ENCODE measurements at regions of chr20 and their contacts with region 1.

Region 1: GRCh38 chr20:35741892-35742740 is at the start of gene RBM39:
- H3K4me3 ChIP-seq: peak within 1 kb of the TSS; percentile 91
- H3K27ac ChIP-seq: peak within 1 kb of the TSS; percentile 100
- H3K4me1 ChIP-seq: no peaks in the 10 kb centered on the region
- CTCF ChIP-seq: peak; percentile 91

Region 2: GRCh38 chr20:35699127-35699975 is 42.8 kb before region 1 on chr20 and contains the starts of genes NFS1 and ROMO1:
- CTCF ChIA-PET with region 1: no interaction called
- POLR2A ChIA-PET with region 1: interaction called, 27 read pairs
- H3K4me3 ChIP-seq: peak within 1 kb of the TSS; percentile 75
- H3K27ac ChIP-seq: peak within 1 kb of the TSS; percentile 90
- H3K4me1 ChIP-seq: 0 out of 2 replicates have a peak, but pooled peaks cover 4% of the 10 kb centered on the region
- CTCF ChIP-seq: peak; percentile 96

Region 3: GRCh38 chr20:35771689-35772562 is 29.8 kb after region 1 on chr20 and contains the start of gene PHF20:
- CTCF ChIA-PET with region 1: interaction called, 5 read pairs
- POLR2A ChIA-PET with region 1: interaction called, 109 read pairs
- H3K4me3 ChIP-seq: peak within 1 kb of the TSS; percentile 83
- H3K27ac ChIP-seq: peak within 1 kb of the TSS; percentile 55
- H3K4me1 ChIP-seq: peaks cover 19% of the 10 kb centered on the region
- CTCF ChIP-seq: no peak

Region 4: GRCh38 chr20:35828434-35828833 is 86.3 kb after region 1 on chr20:
- CTCF ChIA-PET with region 1: no interaction called
- POLR2A ChIA-PET with region 1: no interaction called
- H3K4me3 ChIP-seq: no peak overlapping the region
- H3K27ac ChIP-seq: no peak overlapping the region
- H3K4me1 ChIP-seq: no peaks in the 10 kb centered on the region
- CTCF ChIP-seq: no peak

Region 5: GRCh38 chr20:35883778-35884540 is 141.8 kb after region 1 on chr20:
- CTCF ChIA-PET with region 1: interaction called, 15 read pairs
- POLR2A ChIA-PET with region 1: interaction called, 28 read pairs
- H3K4me3 ChIP-seq: peak overlapping the region; percentile 36
- H3K27ac ChIP-seq: no peak overlapping the region
- H3K4me1 ChIP-seq: no peaks in the 10 kb centered on the region; the same call in 1 of the 2 replicates
- CTCF ChIP-seq: peak; percentile 83

Measured in HEK293 (cell line).